ENCODE measurements at regions of chr16 and their contacts with region 1.

Region 1: DNA sequence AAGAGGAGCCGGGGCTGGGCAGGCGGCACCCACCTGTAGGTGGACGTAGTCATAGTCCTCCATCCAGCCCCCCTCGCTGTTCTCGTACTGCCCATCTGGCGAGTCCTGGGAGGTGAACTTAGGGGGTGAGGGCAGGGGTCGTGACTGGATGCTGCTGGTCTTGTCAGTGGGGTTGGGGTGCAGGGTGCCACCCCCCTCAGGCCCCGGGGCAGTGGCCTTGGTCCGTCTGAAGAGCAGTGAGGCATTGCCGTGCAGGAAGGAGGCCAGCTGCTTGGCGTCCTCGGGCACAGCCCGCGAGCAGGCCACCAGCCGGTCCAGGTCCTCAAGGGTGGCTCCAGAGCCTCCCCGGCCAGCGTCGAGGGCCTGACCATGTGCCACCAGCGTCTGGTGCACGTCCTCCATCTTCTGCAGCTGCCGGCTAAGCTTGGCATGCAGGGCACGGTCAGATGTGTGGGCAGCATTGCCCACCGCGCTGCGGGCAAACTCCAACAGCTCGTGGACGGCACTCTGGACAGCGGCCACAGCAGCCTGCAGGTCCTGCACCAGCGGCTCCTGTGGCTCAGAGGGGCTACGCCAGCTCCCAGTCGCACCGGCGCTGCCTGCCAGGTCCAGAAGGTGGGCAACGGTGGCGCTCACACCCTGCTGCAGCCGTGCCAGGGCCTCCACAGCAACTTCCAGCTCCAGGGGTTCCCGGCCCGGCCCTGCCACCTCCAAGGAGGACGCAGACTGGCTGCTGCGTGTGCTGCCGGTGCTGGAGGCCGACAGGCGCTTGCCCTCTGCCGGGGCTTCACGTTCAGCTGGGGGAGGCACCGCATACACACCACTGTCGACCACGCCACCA is 16.3 kb downstream of the CTRB1 start:
- DNase-seq: no peak
- ATAC-seq: no peak
- H3K4me3 ChIP-seq: no peak overlapping the region
- H3K27ac ChIP-seq: peak overlapping the region; percentile 72
- H3K4me1 ChIP-seq: peaks cover 20 to 33% of the 10 kb centered on the region in 2 experiments
- H3K27me3 ChIP-seq: no peaks in the 10 kb centered on the region
- CTCF ChIP-seq: no peak
- POLR2A ChIP-seq: no peak
- RAD21 ChIP-seq: no peak

Region 2: DNA sequence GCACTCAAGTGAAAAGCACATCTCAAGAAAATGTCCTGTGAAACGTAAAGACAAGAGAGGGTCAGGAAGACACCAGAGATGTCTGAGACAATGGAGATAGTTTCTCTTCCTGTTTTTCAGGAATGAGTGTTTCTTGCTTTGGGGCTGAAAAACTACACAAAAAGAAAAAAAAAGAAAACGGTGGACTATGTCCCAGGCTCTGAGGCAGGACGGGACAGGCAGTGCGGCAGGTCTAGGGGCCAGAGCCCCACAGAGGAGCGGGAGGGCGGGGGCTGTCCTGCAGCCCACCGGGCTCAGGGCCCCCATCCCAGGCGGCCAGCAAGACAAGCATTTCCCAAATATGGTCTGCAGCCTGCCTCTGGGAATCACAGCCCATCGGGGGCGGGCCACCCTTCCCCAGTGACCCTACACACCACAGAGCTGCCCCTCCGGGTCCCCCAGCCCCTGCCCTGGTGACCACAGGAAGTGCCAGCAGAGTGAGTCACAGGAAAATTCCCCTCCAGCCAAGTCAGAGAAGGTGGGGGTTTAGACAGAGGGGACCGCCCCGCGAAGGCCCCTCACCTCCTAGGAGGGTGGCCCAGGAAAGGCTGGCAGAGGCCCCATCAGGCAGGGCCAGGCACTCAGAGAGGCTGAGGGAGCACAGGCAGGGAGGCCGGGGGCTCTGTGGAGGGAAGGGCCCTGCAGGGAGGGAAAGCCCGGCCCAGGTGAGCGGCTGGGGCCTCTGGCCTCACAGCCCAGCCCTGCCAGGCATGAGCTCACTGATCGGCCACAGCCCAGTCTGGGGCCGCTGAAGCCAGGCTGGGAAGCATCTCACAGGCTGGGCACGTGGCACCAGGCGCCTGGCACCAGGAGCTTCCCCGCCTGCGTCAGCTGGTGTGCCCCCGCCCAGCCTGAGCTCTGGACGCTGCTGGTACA is 10.0 kb after region 1 on chr16:
- CTCF ChIA-PET with region 1: interaction called, 12 read pairs
- POLR2A ChIA-PET with region 1: interaction called, 3 read pairs
- RAD21 ChIA-PET with region 1: interaction called, 3 to 4 read pairs
- intact Hi-C with region 1: no loop called
- DNase-seq: no peak
- ATAC-seq: peak; percentile 77
- H3K4me3 ChIP-seq: peak overlapping the region; percentile 7 to 30; a peak in 2 of 4 replicates
- H3K27ac ChIP-seq: peak overlapping the region; percentile 97
- H3K4me1 ChIP-seq: peaks cover 68 to 69% of the 10 kb centered on the region in 2 experiments
- H3K27me3 ChIP-seq: no peaks in the 10 kb centered on the region
- CTCF ChIP-seq: no peak
- POLR2A ChIP-seq: no peak
- RAD21 ChIP-seq: no peak

Region 3: DNA sequence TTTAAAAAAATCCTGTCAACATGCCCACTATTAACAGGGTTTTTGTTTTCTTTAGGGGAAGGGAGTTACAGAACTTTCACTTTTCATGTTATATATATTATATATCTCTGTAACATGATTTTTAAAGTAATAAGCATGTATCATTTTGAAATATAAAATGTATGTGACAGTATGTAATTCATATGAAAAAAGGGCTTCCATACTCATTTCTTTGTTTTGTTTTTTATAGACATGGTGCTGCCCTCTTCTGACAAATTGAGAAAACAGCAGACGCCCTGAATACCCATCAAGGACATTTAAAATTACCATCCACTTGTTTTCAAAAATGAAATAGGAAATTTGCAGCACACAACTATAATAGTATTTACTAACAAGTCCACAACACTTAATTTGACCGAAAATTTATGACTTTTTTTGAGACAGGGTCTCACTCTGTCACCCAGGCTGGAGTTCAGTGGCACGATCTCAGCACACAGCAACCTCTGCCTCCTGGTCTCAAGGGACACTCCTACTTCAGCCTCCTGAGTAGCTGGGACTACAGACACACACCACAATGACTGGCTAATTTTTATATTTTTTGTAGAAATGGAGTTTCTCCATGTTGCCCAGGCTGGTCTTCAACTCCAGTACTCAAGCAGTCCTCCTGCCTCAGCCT is 167.9 kb after region 1 on chr16:
- CTCF ChIA-PET with region 1: interaction called, 4 read pairs
- POLR2A ChIA-PET with region 1: no interaction called
- RAD21 ChIA-PET with region 1: no interaction called
- intact Hi-C with region 1: loop called (anchors 5 kb)
- DNase-seq: peak; percentile 10
- ATAC-seq: peak; percentile 67
- H3K4me3 ChIP-seq: no peak overlapping the region
- H3K27ac ChIP-seq: no peak overlapping the region
- H3K4me1 ChIP-seq: peaks cover 0 to 7% of the 10 kb centered on the region in 2 experiments; a peak in 1 of 4 replicates
- H3K27me3 ChIP-seq: no peaks in the 10 kb centered on the region
- CTCF ChIP-seq: peak; percentile 49 to 67 (median 65); a peak in 5 of 6 replicates
- POLR2A ChIP-seq: no peak
- RAD21 ChIP-seq: peak; percentile 69

Measured in HCT116 (cell line).